GM10248 (cell line): ENCODE measurements at regions of chr4 and their contacts with region 1.

Region 1: GRCh38 chr4:38091636-38092035 is 131.4 kb downstream of the PTTG2 start:
- DNase-seq: no peak
- CTCF ChIP-seq: no peak

Region 2: GRCh38 chr4:38078590-38079421 is 12.8 kb before region 1 on chr4:
- CTCF ChIA-PET with region 1: interaction called, 12 read pairs
- POLR2A ChIA-PET with region 1: interaction called, 3 read pairs
- DNase-seq: no peak
- CTCF ChIP-seq: no peak